ENCODE measurements at regions of chr4 and their contacts with region 1.

Region 1: DNA sequence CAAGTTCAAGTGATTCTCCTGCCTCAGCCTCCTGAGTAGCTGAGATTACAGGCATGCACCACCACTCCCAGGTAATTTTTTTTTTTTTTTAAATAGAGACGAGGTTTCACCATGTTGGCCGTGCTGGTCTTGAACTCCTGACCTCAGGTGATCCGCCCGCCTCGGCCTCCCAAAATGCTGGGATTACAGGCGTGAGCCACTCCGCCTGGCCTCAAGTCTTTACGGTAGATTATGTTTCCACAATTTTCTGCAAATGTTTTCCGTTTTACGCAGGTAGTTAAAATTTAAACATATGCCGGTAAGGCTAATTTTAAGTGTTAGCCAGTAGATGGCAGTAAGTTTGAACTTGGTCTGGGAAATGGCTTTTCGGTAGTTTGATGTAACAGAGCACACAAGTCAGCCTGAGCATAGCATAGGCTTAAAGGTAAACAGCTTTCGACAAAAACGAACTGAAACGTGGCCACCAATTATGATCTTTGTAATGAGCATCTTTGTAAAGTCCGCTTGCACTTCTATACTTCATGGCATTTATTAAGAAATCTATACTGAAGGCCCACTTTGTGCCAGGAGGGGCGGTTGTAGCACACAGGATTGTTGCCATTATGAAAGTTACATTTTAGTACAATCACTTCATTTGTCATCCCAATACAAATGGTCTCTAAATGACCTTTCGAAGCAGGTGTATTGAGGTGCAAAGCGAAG is 31.1 kb downstream of the CCKAR start:
- DNase-seq: no peak
- H3K4me3 ChIP-seq: peak overlapping the region in 1 of 4 donors; percentile 25
- H3K27ac ChIP-seq: peak overlapping the region in 1 of 4 donors; percentile 57
- H3K4me1 ChIP-seq: peaks cover 0 to 43% (median 34%) of the 10 kb centered on the region in 4 donors
- H3K27me3 ChIP-seq: no peaks in the 10 kb centered on the region
- CTCF ChIP-seq: peak; percentile 58 to 65 (median 59)
- EP300 ChIP-seq: no peak
- POLR2A ChIP-seq: no peak

Region 2: GRCh38 chr4:26356081-26356501 is 103.1 kb before region 1 on chr4:
- intact Hi-C with region 1: no loop called
- DNase-seq: no peak
- H3K4me3 ChIP-seq: no peak overlapping the region
- H3K27ac ChIP-seq: no peak overlapping the region
- H3K4me1 ChIP-seq: peaks cover 15 to 41% (median 23%) of the 10 kb centered on the region in 4 donors
- H3K27me3 ChIP-seq: no peaks in the 10 kb centered on the region
- CTCF ChIP-seq: no peak
- EP300 ChIP-seq: no peak
- POLR2A ChIP-seq: no peak

Region 3: DNA sequence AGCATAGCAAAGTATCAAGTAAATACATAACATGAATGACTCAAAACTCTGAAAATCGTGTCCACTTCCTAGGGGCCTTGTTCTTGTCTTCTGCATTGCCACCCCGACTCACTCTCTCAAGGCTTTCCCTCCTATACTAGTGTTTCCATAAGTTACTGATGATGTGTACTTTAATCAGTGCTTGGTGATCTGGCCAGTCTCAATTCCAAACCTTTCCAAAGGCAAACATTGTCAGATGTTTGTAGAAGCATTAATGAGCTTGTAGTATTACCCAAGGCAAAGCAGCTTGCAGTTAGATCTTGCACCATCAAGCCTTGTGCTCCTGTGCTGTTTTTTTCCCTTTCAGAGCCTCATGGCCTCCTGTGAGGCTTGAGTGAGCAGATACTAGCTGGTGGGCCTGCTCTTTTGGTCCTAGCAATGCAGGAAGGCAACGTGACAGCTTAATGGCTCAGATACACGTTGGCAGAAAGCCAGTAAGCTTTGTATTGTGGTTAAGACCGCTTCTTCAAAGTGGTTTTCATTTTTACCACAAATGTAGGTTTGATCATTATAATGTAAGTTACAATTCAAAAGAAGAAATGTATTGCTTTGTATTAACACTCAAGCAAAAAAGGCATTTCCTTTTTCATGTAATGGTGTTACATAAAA is 86.6 kb before region 1 on chr4:
- intact Hi-C with region 1: no loop called
- DNase-seq: no peak
- H3K4me3 ChIP-seq: no peak overlapping the region
- H3K27ac ChIP-seq: no peak overlapping the region
- H3K4me1 ChIP-seq: peaks cover 25 to 69% (median 57%) of the 10 kb centered on the region in 4 donors
- H3K27me3 ChIP-seq: no peaks in the 10 kb centered on the region
- CTCF ChIP-seq: no peak
- EP300 ChIP-seq: no peak
- POLR2A ChIP-seq: no peak

Region 4: GRCh38 chr4:26719954-26720552 is 260.8 kb after region 1 on chr4:
- intact Hi-C with region 1: loop called (anchors 5 kb)
- DNase-seq: no peak
- H3K4me3 ChIP-seq: no peak overlapping the region
- H3K27ac ChIP-seq: no peak overlapping the region
- H3K4me1 ChIP-seq: no peaks in the 10 kb centered on the region
- H3K27me3 ChIP-seq: no peaks in the 10 kb centered on the region
- CTCF ChIP-seq: peak; percentile 50 to 65 (median 57)
- EP300 ChIP-seq: no peak
- POLR2A ChIP-seq: no peak

Region 5: GRCh38 chr4:27010334-27010940 is 551.2 kb after region 1 on chr4:
- intact Hi-C with region 1: loop called (anchors 5 kb)
- DNase-seq: no peak
- H3K4me3 ChIP-seq: no peak overlapping the region
- H3K27ac ChIP-seq: no peak overlapping the region
- H3K4me1 ChIP-seq: peaks cover 0 to 21% (median 12%) of the 10 kb centered on the region in 4 donors
- H3K27me3 ChIP-seq: no peaks in the 10 kb centered on the region
- CTCF ChIP-seq: peak; percentile 87 to 92 (median 88)
- EP300 ChIP-seq: no peak
- POLR2A ChIP-seq: no peak

Measured in esophagus muscularis mucosa (tissue), 4 donors.